ENCODE measurements at regions of chr12 and their contacts with region 1.

Region 1: DNA sequence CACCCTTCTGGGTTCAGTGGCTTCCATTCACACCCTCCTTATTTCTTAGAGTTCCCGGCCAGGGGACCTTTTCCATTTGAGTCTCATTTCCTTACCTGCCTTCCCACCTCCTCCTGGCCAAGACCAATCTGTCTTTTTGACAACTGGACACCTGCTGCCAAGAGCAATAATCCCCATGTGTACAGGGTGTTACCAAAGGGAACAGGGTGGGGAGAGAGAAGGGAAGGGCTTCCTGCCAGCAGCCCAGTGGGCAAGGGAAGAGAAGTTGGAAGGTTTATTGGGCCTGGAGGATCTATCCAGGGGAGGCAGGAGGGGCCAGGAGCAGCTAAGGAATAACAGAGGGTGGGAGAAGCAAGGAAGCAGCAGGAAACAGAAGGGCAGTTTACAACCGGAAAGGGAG is 346.2 kb downstream of the C12orf75 start:
- DNase-seq: no peak
- H3K4me3 ChIP-seq: no peak overlapping the region
- H3K27ac ChIP-seq: no peak overlapping the region
- H3K4me1 ChIP-seq: peaks cover 12% of the 10 kb centered on the region
- H3K27me3 ChIP-seq: no peaks in the 10 kb centered on the region

Region 2: GRCh38 chr12:105427883-105428282 is 248.8 kb before region 1 on chr12:
- in situ Hi-C with region 1: loop called (anchors 25 kb)
- DNase-seq: peak; percentile 63
- H3K4me3 ChIP-seq: no peak overlapping the region
- H3K27ac ChIP-seq: no peak overlapping the region
- H3K4me1 ChIP-seq: peaks cover 23% of the 10 kb centered on the region
- H3K27me3 ChIP-seq: no peaks in the 10 kb centered on the region